Activated T-helper 2 cell treated with anti-CD3 and anti-CD28 coated beads, Interferon-gamma antibody, Interleukin-2, Interleukin-4, amounts not matched to agents 10 μg/mL and 5 μg/mL and 100 μg/mL, durations not matched to agents 14 hours and 24 hours and 36 hours (primary cell): ENCODE measurements at regions of chr7 and their contacts with region 1.

Region 1: DNA sequence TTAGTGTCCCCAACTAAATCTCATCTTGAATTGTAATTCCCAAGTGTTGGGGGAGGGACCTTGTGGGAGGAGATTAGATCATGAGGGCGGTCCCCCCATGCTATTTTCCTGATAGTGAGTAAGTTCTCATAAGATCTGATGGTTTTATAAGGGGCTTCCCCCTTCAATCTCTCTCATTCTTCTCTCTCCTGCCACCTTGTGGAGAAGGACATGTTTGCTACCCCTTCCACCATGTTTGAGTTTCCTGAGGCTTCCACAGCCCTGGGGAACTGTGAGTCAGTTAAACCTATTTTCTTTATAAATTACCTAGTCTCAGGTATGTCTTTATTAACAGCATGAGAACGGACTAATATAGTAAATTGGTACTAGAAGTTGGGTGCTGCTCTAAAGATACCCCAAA is 365.6 kb downstream of the ANKRD7 start:
- DNase-seq: no peak
- H3K4me3 Mint-ChIP-seq: no peak overlapping the region
- H3K27ac Mint-ChIP-seq: no peak overlapping the region
- H3K4me1 Mint-ChIP-seq: no peaks in the 10 kb centered on the region
- H3K27me3 Mint-ChIP-seq: no peaks in the 10 kb centered on the region

Region 2: GRCh38 chr7:118259115-118259514 is 331.0 kb before region 1 on chr7:
- intact Hi-C with region 1: loop called (anchors 2 kb)
- DNase-seq: no peak
- H3K4me3 Mint-ChIP-seq: no peak overlapping the region
- H3K27ac Mint-ChIP-seq: no peak overlapping the region
- H3K4me1 Mint-ChIP-seq: no peaks in the 10 kb centered on the region
- H3K27me3 Mint-ChIP-seq: peaks cover 21% of the 10 kb centered on the region